Calu3 (cell line): ENCODE measurements at regions of chr6 and their contacts with region 1.

Region 1: DNA sequence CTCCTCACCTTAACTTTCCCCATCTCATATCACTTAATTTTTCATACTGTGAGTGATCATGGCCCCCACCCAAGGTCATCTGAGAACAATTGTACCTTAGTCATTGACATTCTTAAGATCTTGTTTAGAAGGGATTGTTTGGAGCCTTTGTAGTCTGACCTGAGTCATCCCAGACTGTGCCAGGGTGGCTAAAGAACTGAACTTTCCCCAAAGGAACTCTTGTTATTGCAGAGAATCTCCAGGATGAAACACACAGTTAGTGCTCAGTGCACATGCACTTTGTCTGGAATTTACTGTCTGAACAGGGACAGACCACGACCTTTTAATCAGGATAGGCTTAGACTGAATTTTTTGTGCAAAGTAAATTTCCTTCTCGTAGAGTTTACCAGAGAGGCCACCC is 112.6 kb upstream of the CCN2 start:
- DNase-seq: peak; percentile 50
- H3K4me3 Mint-ChIP-seq: no peak overlapping the region
- H3K27ac Mint-ChIP-seq: peak overlapping the region; percentile 90
- H3K4me1 Mint-ChIP-seq: peaks cover 60% of the 10 kb centered on the region
- H3K27me3 Mint-ChIP-seq: no peaks in the 10 kb centered on the region
- CTCF ChIP-seq: no peak

Region 2: GRCh38 chr6:131949909-131950766 is 113.6 kb before region 1 on chr6:
- CTCF ChIA-PET with region 1: interaction called, 3 read pairs
- intact Hi-C with region 1: loop called (anchors 2 kb)
- DNase-seq: peak; percentile 80
- H3K4me3 Mint-ChIP-seq: peak overlapping the region; percentile 85
- H3K27ac Mint-ChIP-seq: peak overlapping the region; percentile 94
- H3K4me1 Mint-ChIP-seq: peaks cover 54% of the 10 kb centered on the region
- H3K27me3 Mint-ChIP-seq: no peaks in the 10 kb centered on the region
- CTCF ChIP-seq: no peak

Region 3: DNA sequence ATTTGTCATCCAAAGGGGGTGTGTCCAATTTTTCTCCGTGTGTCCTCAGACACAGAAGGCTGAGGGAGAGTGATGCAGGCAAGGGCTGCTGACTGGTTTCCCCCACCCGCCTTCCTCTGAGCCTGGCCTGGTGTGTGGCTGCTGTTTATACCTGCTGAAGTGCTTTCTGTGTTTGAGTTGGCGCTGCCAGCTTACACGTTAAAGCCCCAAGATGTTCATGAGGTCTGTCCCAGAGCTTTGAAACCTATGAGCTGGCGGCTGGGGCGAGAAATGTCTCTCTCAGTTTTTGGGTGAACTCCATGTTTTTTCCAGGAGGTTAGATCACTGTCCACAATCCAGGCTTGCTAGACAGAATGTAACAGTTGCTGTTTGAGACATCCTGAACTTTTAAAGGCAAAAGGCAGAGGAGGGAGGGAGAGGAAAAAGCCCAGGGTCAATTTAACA is 43.6 kb before region 1 on chr6:
- CTCF ChIA-PET with region 1: no interaction called
- intact Hi-C with region 1: loop called (anchors 5 kb)
- DNase-seq: no peak
- H3K4me3 Mint-ChIP-seq: no peak overlapping the region
- H3K27ac Mint-ChIP-seq: no peak overlapping the region
- H3K4me1 Mint-ChIP-seq: peaks cover 41% of the 10 kb centered on the region
- H3K27me3 Mint-ChIP-seq: no peaks in the 10 kb centered on the region
- CTCF ChIP-seq: no peak

Region 4: DNA sequence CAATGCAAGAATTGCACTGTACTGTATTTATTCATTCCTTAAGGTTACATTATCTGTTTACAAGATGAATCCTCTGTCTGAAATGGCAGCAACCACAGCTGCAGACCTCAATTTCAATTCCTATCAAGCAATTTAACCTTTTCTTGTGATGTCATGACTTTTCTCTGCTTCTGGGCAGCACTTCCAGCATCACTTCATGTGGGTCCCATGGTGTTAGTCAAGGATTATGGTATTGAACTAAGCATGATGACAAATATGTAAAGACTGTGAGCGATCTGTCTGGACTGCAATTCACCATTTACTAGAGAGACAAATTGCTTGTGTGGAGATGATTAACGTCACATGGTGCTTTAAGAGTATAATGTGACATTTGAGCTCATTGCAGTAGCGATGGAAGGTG is 22.0 kb before region 1 on chr6:
- CTCF ChIA-PET with region 1: no interaction called
- intact Hi-C with region 1: no loop called
- DNase-seq: no peak
- H3K4me3 Mint-ChIP-seq: no peak overlapping the region
- H3K27ac Mint-ChIP-seq: no peak overlapping the region
- H3K4me1 Mint-ChIP-seq: peaks cover 8% of the 10 kb centered on the region
- H3K27me3 Mint-ChIP-seq: no peaks in the 10 kb centered on the region
- CTCF ChIP-seq: no peak

Region 5: DNA sequence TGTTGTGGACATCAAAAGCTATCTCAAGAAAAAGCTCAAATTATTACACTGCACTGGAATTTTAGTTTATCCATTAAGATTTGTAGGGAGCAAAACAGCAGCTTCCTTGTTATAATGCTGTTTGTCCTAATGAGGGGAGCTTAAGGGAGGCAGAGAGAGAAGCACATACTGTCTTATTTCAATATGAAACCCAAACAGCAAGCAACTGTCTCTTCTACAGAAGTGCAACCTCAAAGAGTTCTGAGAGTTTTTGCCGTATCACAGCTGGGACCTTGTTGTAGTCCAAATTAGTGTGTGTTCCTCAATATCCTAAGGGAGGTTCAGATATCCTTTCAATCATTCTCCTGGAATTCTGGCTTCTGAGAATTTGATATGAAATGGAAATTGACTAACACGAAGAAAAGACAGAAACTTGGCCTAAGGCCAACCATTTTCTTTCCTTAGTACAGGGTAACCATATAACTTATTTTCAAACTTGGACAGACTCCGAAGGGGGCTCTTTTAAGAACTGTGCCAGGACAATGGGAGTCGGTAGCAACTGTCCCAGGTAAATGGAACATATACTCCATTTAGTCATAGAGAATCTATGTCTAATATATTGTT is 36.8 kb after region 1 on chr6:
- CTCF ChIA-PET with region 1: no interaction called
- intact Hi-C with region 1: loop called (anchors 5 kb)
- DNase-seq: no peak
- H3K4me3 Mint-ChIP-seq: no peak overlapping the region
- H3K27ac Mint-ChIP-seq: peak overlapping the region; percentile 64
- H3K4me1 Mint-ChIP-seq: peaks cover 22% of the 10 kb centered on the region
- H3K27me3 Mint-ChIP-seq: no peaks in the 10 kb centered on the region
- CTCF ChIP-seq: no peak

Region 6: DNA sequence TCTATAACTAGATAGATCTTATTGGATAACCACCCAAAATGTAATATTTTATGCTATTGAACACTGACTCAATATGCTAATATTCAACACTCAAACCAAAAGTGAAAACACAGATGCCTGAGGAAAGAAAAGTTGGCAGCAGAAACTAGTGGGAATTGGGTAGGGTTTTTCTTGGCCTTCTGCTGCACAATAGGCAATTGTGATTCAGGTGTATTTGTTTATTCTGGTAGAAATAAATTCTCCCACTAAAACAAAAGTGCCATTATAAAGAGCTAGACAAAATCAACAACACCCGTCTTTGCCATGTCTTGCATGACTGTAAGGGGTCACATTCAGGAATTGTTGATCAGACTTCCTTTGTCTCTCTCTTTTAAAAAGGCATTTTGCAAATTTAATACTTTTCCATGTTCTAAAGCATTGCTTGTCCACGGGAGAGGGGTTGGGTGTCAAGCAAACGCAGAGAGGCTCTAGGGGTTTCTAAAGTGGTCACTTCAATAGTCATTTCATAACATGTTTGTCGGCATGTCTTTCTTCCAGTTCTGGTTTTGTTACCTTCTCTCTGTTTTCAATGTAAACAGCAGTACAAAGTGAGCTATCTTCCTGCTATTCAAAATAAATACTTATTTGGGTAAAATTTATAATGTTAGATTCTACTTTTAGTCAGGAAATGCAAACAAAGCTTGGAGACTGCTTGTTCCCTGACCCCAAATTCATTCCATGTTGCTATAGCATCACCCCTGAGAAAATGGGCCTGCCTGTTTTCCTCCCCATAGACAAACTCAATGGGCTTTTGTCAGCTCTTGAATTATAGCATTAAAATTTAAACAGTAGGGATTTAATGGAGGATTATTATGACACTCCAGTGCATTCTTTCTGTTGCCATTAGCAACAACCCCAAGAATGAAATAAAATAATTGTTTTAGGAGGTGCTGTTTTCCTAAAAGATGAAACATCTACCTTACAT is 104.5 kb after region 1 on chr6:
- CTCF ChIA-PET with region 1: no interaction called
- intact Hi-C with region 1: loop called (anchors 5 kb)
- DNase-seq: peak; percentile 47
- H3K4me3 Mint-ChIP-seq: peak overlapping the region; percentile 32
- H3K27ac Mint-ChIP-seq: peak overlapping the region; percentile 82
- H3K4me1 Mint-ChIP-seq: peaks cover 12% of the 10 kb centered on the region
- H3K27me3 Mint-ChIP-seq: no peaks in the 10 kb centered on the region
- CTCF ChIP-seq: no peak

Region 7: GRCh38 chr6:132725947-132726607 is 662.3 kb after region 1 on chr6:
- CTCF ChIA-PET with region 1: no interaction called
- intact Hi-C with region 1: loop called (anchors 10 kb)
- DNase-seq: no peak
- H3K4me3 Mint-ChIP-seq: no peak overlapping the region
- H3K27ac Mint-ChIP-seq: no peak overlapping the region
- H3K4me1 Mint-ChIP-seq: peaks cover 32% of the 10 kb centered on the region
- H3K27me3 Mint-ChIP-seq: no peaks in the 10 kb centered on the region
- CTCF ChIP-seq: no peak